HCT116 (cell line): ENCODE measurements at regions of chr9 and their contacts with region 1.

Region 1: GRCh38 chr9:73011181-73011750 is 58.4 kb upstream of the ALDH1A1 start:
- DNase-seq: no peak
- ATAC-seq: no peak
- H3K4me3 ChIP-seq: no peak overlapping the region
- H3K27ac ChIP-seq: no peak overlapping the region
- H3K4me1 ChIP-seq: no peaks in the 10 kb centered on the region
- H3K27me3 ChIP-seq: no peaks in the 10 kb centered on the region
- CTCF ChIP-seq: no peak
- POLR2A ChIP-seq: no peak
- RAD21 ChIP-seq: no peak

Region 2: DNA sequence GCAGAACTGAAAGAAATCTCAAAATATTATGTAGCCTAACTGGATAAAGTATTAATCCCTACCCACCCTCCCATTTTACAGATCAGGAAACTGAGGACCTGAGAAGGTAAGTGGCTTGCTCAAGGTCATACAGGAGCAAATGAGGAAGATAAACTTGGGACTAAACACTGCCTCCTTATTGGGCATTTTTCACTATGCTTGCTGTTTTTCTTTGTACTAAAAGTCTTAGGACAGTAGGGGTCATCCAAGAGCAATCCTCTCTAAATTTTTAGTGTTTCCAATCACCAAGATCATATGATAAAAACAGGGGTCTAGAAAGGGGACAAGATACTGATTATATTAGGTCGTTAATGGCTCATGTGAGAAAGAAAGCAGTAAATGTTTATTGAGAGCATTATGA is 1566.7 kb after region 1 on chr9:
- CTCF ChIA-PET with region 1: no interaction called
- POLR2A ChIA-PET with region 1: no interaction called
- RAD21 ChIA-PET with region 1: no interaction called
- intact Hi-C with region 1: loop called (anchors 5 kb)
- DNase-seq: peak; percentile 1
- ATAC-seq: peak; percentile 67
- H3K4me3 ChIP-seq: no peak overlapping the region
- H3K27ac ChIP-seq: no peak overlapping the region
- H3K4me1 ChIP-seq: no peaks in the 10 kb centered on the region
- H3K27me3 ChIP-seq: peaks cover 59% of the 10 kb centered on the region
- CTCF ChIP-seq: peak; percentile 25 to 48 (median 44); a peak in 5 of 6 replicates
- POLR2A ChIP-seq: no peak
- RAD21 ChIP-seq: no peak